Activated B cell treated with CpG ODN at 0.5 μM for 24 hours (primary cell): ENCODE measurements at regions of chr3 and their contacts with region 1.

Region 1: GRCh38 chr3:191336833-191337232 is 6.5 kb upstream of the UTS2B start:
- DNase-seq: no peak
- ATAC-seq: no peak
- H3K4me3 Mint-ChIP-seq: peak overlapping the region; percentile 64
- H3K27ac Mint-ChIP-seq: peak overlapping the region; percentile 79
- H3K4me1 Mint-ChIP-seq: peaks cover 97% of the 10 kb centered on the region
- H3K27me3 Mint-ChIP-seq: no peaks in the 10 kb centered on the region
- CTCF ChIP-seq: no peak

Region 2: DNA sequence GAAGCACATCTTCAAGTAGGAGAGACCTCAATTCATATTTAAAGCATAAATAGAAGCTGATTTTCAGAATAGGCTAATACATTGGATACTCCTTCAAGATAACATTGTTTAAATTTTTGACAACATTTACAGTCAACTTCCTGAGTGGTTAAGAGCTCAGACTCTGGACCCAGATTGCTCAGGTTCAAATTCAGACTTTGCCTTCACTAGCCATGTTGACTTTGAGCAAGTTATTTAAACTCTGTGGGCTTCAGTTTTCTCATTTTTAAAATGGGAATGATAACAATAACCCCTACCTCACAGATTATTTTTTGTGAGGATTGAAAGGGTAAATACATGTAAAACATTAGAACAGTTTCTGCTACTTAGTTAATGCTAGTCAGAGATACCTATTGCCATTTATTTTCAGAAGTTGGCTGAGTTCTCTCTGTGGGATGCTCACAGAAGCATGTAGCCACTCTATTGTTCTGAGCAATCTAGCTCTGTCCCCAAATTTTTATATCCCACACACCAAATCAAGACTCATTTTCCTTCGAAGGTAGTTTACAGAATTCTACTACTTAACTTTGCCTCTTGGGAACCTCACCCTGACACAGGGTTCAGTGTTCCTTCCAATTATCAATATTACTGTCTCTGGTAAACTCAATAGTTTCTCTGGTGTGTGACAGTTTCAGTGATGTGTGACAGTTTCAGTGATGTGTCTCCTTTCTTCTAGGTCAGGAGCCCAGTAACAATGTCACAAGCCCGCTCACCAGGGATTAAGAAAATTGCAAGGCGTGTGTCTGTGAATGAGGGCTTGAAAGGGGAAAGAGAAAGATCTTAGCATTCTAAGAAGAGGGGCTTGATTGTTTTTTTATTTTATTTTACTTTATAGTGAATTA is 217.2 kb before region 1 on chr3:
- CTCF ChIA-PET with region 1: no interaction called
- POLR2A ChIA-PET with region 1: no interaction called
- intact Hi-C with region 1: no loop called
- DNase-seq: no peak
- ATAC-seq: no peak
- H3K4me3 Mint-ChIP-seq: no peak overlapping the region
- H3K27ac Mint-ChIP-seq: no peak overlapping the region
- H3K4me1 Mint-ChIP-seq: peaks cover 4% of the 10 kb centered on the region
- H3K27me3 Mint-ChIP-seq: no peaks in the 10 kb centered on the region
- CTCF ChIP-seq: no peak

Region 3: GRCh38 chr3:191244242-191244867 is 92.5 kb before region 1 on chr3:
- CTCF ChIA-PET with region 1: interaction called, 11 read pairs
- POLR2A ChIA-PET with region 1: interaction called, 4 read pairs
- intact Hi-C with region 1: loop called (anchors 1 kb)
- DNase-seq: no peak
- ATAC-seq: peak; percentile 26
- H3K4me3 Mint-ChIP-seq: no peak overlapping the region
- H3K27ac Mint-ChIP-seq: no peak overlapping the region
- H3K4me1 Mint-ChIP-seq: peaks cover 40% of the 10 kb centered on the region
- H3K27me3 Mint-ChIP-seq: no peaks in the 10 kb centered on the region
- CTCF ChIP-seq: peak; percentile 76

Region 4: DNA sequence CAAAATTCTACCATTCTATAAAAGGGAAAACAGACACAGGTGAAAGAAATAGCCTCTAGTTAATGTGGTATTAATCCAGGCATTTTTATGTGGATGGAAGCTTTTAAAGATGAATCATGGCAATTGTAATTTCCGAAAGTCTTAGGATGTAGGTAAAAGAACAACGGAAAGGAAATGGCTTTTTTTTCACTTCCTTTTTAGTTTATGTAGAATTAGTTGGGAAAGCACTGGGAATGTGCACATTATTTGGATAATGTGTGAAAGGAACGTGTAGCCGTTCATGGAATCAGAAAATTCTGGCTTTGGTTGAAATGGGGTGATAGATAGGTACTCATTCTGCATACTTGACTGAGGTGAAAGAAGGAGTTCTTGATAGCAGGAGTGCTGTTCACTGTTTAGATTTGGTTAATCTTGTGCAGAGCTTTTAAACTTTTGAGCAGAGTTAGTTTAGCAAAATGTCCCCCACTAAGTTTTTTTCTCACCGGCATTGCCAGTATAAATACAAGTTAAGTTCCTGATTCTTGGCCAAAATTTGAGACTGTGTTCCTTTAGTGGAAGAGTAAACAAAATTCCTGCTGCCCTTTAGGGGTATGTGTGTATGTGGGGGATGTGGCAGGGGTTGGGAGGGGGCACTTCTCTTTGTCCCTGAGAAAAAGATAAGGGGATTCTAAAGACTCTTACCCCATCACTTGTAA is 13.7 kb after region 1 on chr3:
- CTCF ChIA-PET with region 1: interaction called, 3 read pairs
- POLR2A ChIA-PET with region 1: interaction called, 5 read pairs
- intact Hi-C with region 1: loop called (anchors 1 kb)
- DNase-seq: no peak
- ATAC-seq: no peak
- H3K4me3 Mint-ChIP-seq: no peak overlapping the region
- H3K27ac Mint-ChIP-seq: peak overlapping the region; percentile 51
- H3K4me1 Mint-ChIP-seq: peaks cover 50% of the 10 kb centered on the region
- H3K27me3 Mint-ChIP-seq: no peaks in the 10 kb centered on the region
- CTCF ChIP-seq: no peak